ENCODE measurements at regions of chrX and their contacts with region 1.

Region 1: DNA sequence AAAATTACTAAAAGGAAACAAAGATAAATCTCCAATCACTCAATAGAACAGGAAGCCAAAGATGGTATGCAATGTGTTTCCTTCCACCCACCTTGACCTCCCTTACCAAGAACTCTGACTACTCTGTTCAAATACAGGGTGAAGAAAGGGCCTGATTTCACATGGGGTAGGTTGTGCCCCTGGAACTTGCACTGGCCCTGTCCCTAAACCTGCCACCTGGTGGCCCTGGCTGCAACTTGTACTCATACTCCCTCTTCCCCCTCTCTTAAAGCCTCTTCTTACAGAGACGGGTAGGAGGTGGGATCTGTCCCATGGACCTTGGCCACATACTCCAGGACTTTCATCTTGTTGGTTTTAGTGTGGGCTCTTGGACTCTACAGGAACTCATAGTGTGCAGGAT is 17.3 kb upstream of the TMEM185A start:
- DNase-seq: no peak

Region 2: DNA sequence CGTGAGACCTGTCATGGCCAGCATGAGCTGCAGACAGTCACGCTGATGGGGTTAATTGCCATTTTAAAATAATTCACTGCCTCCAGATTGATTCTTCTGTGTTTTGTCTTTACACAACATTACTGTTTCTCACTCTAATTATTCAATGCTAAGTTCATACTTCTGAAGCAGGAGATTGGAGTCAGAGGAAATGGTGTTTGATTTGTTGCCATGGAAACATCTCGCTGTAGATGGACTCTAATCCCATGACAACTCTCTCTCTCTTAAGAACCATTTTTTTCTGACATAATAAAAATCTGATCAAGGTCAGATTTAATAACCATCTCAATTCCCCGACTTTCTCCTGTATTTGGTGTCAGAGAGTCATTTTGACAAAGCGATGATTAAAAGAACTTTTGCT is 352.8 kb before region 1 on chrX:
- intact Hi-C with region 1: no loop called
- DNase-seq: no peak

Region 3: DNA sequence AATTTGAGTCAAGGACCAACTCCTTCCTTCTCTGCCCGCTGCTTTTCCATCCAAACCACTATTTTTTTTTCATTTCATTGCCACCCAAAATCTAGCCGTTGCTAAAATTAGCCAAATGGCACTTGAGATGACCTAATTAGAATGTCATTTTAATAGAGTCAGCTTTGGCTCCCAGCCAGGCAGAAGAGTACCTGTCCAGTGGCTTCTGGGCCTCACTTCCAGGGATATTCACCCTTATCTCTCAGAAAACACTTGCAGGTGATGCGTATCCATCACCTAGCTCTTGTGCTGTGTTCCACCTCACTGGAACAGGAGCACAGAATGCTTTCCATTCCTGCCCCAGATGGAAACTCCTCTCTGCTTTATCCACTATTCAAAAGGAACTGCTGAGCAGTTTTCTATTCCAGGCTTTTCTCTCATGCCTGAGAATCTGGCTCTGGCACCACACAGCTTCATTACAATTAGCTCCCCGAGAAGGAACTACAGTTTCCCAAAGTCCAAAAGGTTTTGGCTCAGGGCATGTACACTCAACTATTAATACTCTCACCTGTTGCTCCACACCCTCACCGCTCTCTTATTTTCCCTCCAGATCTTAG is 80.1 kb before region 1 on chrX:
- intact Hi-C with region 1: loop called (anchors 10 kb)
- DNase-seq: no peak

Measured in cardiac septum (tissue), 1 donor.